Naive thymus-derived CD4-positive, alpha-beta T cell (primary cell): ENCODE measurements at regions of chr5 and their contacts with region 1.

Region 1: DNA sequence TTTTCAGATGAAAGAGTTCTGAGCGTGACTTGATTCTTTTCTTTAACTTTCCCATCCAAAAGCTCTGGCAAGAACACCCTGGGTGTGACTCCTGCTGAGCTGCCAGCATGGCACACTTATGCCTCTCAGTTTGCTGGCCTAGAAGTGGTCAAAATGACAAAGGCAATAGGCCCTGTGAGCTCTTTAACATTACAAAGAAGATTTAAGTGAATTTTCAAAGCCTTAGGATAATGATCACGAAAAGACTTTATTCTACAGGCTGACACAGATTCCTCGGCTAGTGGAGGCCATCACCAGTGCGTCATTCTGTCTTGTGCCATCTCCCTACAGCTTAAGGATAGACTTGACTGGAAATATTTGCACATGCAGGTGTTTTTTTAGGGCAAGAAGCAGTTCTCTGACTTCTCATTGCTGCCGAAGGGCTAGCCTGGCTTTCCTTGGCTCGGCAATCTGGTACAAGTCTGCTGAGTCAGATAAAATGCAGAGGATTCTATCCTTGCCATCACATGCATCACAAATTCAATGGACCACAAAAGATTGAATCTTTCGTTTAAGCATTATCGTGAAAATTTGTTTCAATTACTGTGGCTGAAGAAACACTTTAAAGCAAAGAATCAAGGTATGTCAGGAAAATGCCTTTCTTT is 311.5 kb downstream of the COX7C start:
- DNase-seq: no peak
- ATAC-seq: no peak
- H3K4me3 ChIP-seq: no peak overlapping the region
- H3K4me3 Mint-ChIP-seq: no peak overlapping the region
- H3K27ac ChIP-seq: no peak overlapping the region
- H3K27ac Mint-ChIP-seq: no peak overlapping the region
- H3K4me1 ChIP-seq: no peaks in the 10 kb centered on the region
- H3K4me1 Mint-ChIP-seq: no peaks in the 10 kb centered on the region
- H3K27me3 ChIP-seq: no peaks in the 10 kb centered on the region
- H3K27me3 Mint-ChIP-seq: peaks cover 20 to 52% (median 34%) of the 10 kb centered on the region in 5 donors

Region 2: GRCh38 chr5:86986837-86987236 is 57.6 kb after region 1 on chr5:
- CTCF ChIA-PET with region 1: no interaction called
- POLR2A ChIA-PET with region 1: interaction called, 11 read pairs
- intact Hi-C with region 1: no loop called
- DNase-seq: peak in 1 of 9 donors; percentile 4
- ATAC-seq: no peak
- H3K4me3 ChIP-seq: no peak overlapping the region
- H3K4me3 Mint-ChIP-seq: no peak overlapping the region
- H3K27ac ChIP-seq: no peak overlapping the region
- H3K27ac Mint-ChIP-seq: no peak overlapping the region
- H3K4me1 ChIP-seq: no peaks in the 10 kb centered on the region
- H3K4me1 Mint-ChIP-seq: no peaks in the 10 kb centered on the region
- H3K27me3 ChIP-seq: no peaks in the 10 kb centered on the region
- H3K27me3 Mint-ChIP-seq: peaks cover 0 to 20% (median 0%) of the 10 kb centered on the region in 5 donors